Heart left ventricle (tissue), 16 donors: ENCODE measurements at regions of chr17 and their contacts with region 1.

Region 1: DNA sequence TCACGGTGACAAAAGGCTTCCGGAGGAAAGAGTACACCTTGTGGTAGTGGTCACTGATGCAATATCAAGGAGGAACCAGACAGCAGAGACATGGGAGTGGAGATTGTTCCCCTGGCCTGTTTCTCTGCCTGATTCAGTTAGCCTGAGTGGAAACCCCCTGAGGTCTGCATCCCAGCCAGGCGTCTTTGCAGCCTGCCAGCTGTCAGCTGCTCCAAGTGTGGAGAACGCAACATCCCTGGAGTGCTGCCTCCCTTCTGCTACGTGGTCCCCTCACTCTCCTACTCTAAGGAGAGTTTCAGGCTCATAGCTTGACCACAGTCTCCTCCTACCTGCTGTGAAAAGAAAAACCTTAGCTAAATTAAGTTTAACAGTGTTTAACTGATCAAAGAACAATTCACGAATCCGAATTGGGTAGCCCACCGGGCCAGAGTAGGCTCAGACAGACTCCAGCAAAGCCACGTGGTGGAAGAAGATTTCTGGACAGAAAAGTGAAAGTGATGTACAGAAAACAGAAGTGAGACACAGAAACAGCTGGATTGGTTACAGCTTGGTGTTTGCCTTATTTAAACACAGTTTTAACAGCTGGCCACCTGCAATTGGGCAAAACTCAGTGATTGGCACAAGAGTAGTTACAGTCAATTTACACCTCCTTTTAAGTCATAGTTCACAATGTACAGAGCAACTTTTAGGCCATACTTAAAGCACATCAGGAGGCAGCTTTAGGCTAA is 188.6 kb downstream of the DNAH9 start:
- DNase-seq: no peak
- ATAC-seq: no peak
- H3K4me3 ChIP-seq: no peak overlapping the region
- H3K27ac ChIP-seq: no peak overlapping the region
- H3K4me1 ChIP-seq: no peaks in the 10 kb centered on the region
- H3K27me3 ChIP-seq: no peaks in the 10 kb centered on the region
- CTCF ChIP-seq: no peak
- POLR2A ChIP-seq: no peak

Region 2: DNA sequence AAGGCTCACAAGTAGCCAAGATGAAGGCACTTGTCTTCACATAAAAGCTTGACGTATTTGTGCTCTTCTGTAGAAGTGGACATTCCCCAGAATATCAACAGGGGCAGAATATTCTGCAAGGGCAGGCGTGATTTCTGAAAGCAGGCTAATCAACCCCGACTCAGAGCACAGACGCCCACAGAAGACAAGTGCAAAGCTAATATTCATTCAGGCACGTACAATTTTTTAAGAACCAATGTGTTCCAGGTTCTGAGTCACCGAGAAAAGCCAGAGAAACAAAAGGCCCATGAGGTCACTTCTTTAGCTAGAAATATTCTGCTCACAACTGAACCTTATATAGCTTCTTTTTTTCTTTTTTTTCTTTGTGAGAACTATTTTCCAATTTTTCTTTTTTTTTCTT is 67.0 kb before region 1 on chr17:
- intact Hi-C with region 1: loop called in 1 of 10 experiments (anchors 10 kb)
- DNase-seq: no peak
- ATAC-seq: no peak
- H3K4me3 ChIP-seq: no peak overlapping the region
- H3K27ac ChIP-seq: no peak overlapping the region
- H3K4me1 ChIP-seq: no peaks in the 10 kb centered on the region
- H3K27me3 ChIP-seq: no peaks in the 10 kb centered on the region
- CTCF ChIP-seq: no peak
- POLR2A ChIP-seq: no peak